ENCODE measurements at regions of chr5 and their contacts with region 1.

Region 1: GRCh38 chr5:139765409-139766217 is 30.0 kb upstream of the PSD2 start:
- DNase-seq: peak; percentile 80 to 87 (median 84)
- ATAC-seq: peak; percentile 95
- H3K4me3 ChIP-seq: peak overlapping the region; percentile 66
- H3K27ac ChIP-seq: no peak overlapping the region; the same call in 2 of the 3 replicates
- H3K4me1 ChIP-seq: peaks cover 2 to 22% of the 10 kb centered on the region in 2 experiments; a peak in 3 of 5 replicates
- H3K27me3 ChIP-seq: no peaks in the 10 kb centered on the region
- CTCF ChIP-seq: peak; percentile 73 to 96 (median 86)
- EP300 ChIP-seq: no peak
- POLR2A ChIP-seq: no peak
- RAD21 ChIP-seq: peak; percentile 98 to 99

Region 2: DNA sequence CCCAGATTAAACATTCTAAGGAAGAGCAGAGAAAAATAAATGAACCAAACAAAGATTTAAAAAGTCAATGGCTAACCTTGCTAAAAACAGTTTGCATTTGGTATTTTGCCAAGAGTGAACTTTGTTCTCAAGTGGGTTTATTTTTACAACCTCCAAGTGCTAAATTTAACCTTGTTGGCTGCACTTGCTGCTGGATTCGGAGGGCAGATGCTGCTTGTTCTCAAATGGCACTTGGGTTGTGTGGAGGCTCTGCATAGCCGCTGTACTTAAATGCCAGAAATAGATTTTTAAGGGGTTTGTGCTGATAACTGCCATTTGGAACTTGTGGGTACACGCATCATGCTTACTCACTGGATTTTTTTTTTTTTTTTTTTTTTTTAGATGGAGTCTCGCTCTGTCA is 348.4 kb before region 1 on chr5:
- CTCF ChIA-PET with region 1: interaction called, 11 read pairs
- POLR2A ChIA-PET with region 1: no interaction called
- in situ Hi-C with region 1: loop called (anchors 10 kb)
- intact Hi-C with region 1: loop called (anchors 10 kb)
- DNase-seq: no peak
- ATAC-seq: no peak
- H3K4me3 ChIP-seq: no peak overlapping the region
- H3K27ac ChIP-seq: no peak overlapping the region
- H3K4me1 ChIP-seq: peaks cover 4 to 13% of the 10 kb centered on the region in 2 experiments
- H3K27me3 ChIP-seq: no peaks in the 10 kb centered on the region
- CTCF ChIP-seq: no peak
- EP300 ChIP-seq: no peak
- POLR2A ChIP-seq: no peak
- RAD21 ChIP-seq: no peak

Region 3: GRCh38 chr5:139690064-139690802 is 75.4 kb before region 1 on chr5:
- CTCF ChIA-PET with region 1: no interaction called
- POLR2A ChIA-PET with region 1: interaction called, 4 read pairs
- in situ Hi-C with region 1: no loop called
- intact Hi-C with region 1: loop called (anchors 5 kb)
- DNase-seq: peak; percentile 60 to 85 (median 70)
- ATAC-seq: peak; percentile 70
- H3K4me3 ChIP-seq: no peak overlapping the region
- H3K27ac ChIP-seq: peak overlapping the region; percentile 29
- H3K4me1 ChIP-seq: peaks cover 38 to 60% of the 10 kb centered on the region in 2 experiments
- H3K27me3 ChIP-seq: no peaks in the 10 kb centered on the region; a peak in 1 of 5 replicates
- CTCF ChIP-seq: peak; percentile 53 to 63 (median 56); a peak in 5 of 6 replicates
- EP300 ChIP-seq: no peak
- POLR2A ChIP-seq: no peak
- RAD21 ChIP-seq: peak; percentile 55 to 73; a peak in 3 of 4 replicates

Region 4: DNA sequence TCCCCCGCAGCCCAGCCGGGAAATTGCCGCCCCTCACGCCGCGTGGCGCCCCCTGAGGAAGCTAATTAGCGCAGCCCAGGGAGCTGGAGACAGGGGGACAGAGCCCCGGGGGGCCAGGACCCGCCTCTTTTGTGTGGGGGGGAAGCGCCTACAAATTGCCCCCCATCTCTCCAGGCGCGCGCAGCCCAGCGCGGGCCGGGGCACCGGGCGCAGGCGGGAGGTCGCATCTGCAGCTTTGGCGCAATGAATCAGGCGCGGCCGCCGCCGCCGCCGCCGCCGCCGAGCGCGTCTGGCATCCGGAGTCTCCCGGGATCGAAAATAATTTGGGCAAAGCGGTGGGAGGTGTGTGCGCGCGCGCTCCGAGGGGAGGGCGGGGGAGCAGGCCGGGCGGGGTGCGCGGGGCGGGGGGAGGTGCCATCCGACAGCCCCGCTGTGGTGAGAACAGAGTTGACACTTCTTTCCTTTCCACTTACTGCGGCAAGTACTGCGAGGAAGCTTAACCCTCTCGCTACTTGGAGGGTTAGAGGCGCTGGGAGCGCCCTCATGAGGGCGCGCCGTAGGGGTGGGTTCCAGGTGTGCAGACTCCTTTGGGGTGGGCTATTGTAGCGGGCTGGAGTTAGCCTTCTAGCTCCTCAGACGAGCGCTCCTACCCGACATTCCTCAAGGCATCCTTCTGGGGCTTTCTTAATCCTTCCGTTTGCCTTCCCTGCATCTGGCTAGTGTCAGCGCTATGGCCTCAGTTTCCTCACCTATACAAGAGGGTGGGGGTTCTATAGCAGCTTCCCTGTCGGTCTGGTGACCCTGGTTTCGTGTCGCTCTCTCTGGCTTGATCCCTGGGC is 54.3 kb before region 1 on chr5:
- CTCF ChIA-PET with region 1: interaction called, 3 read pairs
- POLR2A ChIA-PET with region 1: no interaction called
- in situ Hi-C with region 1: no loop called
- intact Hi-C with region 1: loop called (anchors 2 kb)
- DNase-seq: peak; percentile 72 to 87 (median 80)
- ATAC-seq: peak; percentile 65
- H3K4me3 ChIP-seq: peak overlapping the region; percentile 57
- H3K27ac ChIP-seq: peak overlapping the region; percentile 81; the same call in 2 of the 3 replicates
- H3K4me1 ChIP-seq: peaks cover 40 to 50% of the 10 kb centered on the region in 2 experiments
- H3K27me3 ChIP-seq: no peaks in the 10 kb centered on the region
- CTCF ChIP-seq: peak; percentile 37 to 63 (median 54); a peak in 5 of 6 replicates
- EP300 ChIP-seq: no peak
- POLR2A ChIP-seq: no peak
- RAD21 ChIP-seq: peak in 1 of 2 experiments; percentile 58; a peak in 2 of 4 replicates

Measured in K562 (cell line).